Activated naive CD4-positive, alpha-beta T cell treated with anti-CD3 and anti-CD28 coated beads for 36 hours (primary cell): ENCODE measurements at regions of chr1 and their contacts with region 1.

Region 1: GRCh38 chr1:218521375-218522169 is 176.4 kb downstream of the TGFB2 start:
- DNase-seq: peak; percentile 69
- H3K4me3 Mint-ChIP-seq: no peak overlapping the region
- H3K27ac Mint-ChIP-seq: no peak overlapping the region
- H3K4me1 Mint-ChIP-seq: no peaks in the 10 kb centered on the region
- H3K27me3 Mint-ChIP-seq: peaks cover 16% of the 10 kb centered on the region

Region 2: GRCh38 chr1:218259800-218260199 is 261.8 kb before region 1 on chr1:
- CTCF ChIA-PET with region 1: no interaction called
- intact Hi-C with region 1: loop called (anchors 10 kb)
- DNase-seq: peak; percentile 5
- H3K4me3 Mint-ChIP-seq: no peak overlapping the region
- H3K27ac Mint-ChIP-seq: no peak overlapping the region
- H3K4me1 Mint-ChIP-seq: no peaks in the 10 kb centered on the region
- H3K27me3 Mint-ChIP-seq: peaks cover 23% of the 10 kb centered on the region

Region 3: GRCh38 chr1:218299416-218299815 is 222.2 kb before region 1 on chr1:
- CTCF ChIA-PET with region 1: interaction called, 3 read pairs
- intact Hi-C with region 1: loop called (anchors 1 kb)
- DNase-seq: no peak
- H3K4me3 Mint-ChIP-seq: no peak overlapping the region
- H3K27ac Mint-ChIP-seq: no peak overlapping the region
- H3K4me1 Mint-ChIP-seq: peaks cover 27% of the 10 kb centered on the region
- H3K27me3 Mint-ChIP-seq: no peaks in the 10 kb centered on the region

Region 4: DNA sequence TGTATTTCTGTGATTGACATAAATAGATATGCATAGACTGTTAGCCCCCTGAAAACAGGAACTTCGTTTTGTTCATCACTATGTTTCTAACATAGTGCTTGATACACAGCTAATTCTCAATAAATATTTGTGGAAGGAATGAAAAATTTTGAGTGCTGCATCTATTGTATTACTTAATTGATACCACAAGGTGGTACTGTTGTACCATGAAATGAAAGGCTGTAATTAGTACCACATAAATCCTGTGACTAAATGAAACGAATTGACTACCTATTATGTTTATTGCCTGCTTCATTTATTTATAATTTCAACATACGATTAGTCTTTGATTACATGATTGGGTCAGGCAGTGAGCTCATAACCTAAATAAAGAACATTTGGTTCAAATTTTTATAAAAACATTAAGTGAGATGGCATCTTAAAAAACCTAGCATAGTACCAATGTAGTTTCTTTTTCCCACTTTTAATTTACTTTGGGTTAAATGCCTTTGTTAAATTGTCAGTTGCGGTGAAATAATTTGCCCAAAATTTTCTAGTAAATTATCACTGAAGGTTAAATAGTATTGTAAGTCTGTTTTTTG is 191.4 kb before region 1 on chr1:
- CTCF ChIA-PET with region 1: interaction called, 10 read pairs
- intact Hi-C with region 1: loop called (anchors 1 kb)
- DNase-seq: no peak
- H3K4me3 Mint-ChIP-seq: no peak overlapping the region
- H3K27ac Mint-ChIP-seq: no peak overlapping the region
- H3K4me1 Mint-ChIP-seq: no peaks in the 10 kb centered on the region
- H3K27me3 Mint-ChIP-seq: no peaks in the 10 kb centered on the region

Region 5: DNA sequence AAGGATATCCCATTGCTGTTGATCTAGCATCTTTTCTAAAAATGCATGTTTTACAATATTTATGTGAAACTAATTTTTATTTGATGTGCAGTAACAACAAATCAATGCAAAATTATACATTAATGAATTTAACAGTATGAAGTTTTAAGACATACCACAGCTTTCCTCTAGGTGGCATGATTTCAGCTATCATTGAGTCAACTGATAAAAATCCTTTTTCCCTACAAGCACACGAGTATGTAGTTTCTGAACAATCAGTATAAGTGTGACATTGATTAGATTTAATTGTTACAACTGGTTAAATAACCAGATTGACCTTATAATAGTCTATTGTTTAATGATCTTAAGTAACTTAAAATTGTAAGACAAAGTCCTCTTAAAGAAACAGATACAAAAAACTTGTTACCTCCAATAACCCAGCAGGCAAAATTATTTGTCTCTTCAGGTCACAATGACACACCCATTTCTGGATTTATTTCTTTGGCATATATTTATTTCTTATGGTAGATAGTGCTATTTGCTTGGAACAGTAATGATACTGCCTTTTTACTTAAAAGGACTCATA is 182.2 kb before region 1 on chr1:
- CTCF ChIA-PET with region 1: interaction called, 4 read pairs
- intact Hi-C with region 1: loop called (anchors 1 kb)
- DNase-seq: no peak
- H3K4me3 Mint-ChIP-seq: no peak overlapping the region
- H3K27ac Mint-ChIP-seq: no peak overlapping the region
- H3K4me1 Mint-ChIP-seq: no peaks in the 10 kb centered on the region
- H3K27me3 Mint-ChIP-seq: peaks cover 17% of the 10 kb centered on the region

Region 6: DNA sequence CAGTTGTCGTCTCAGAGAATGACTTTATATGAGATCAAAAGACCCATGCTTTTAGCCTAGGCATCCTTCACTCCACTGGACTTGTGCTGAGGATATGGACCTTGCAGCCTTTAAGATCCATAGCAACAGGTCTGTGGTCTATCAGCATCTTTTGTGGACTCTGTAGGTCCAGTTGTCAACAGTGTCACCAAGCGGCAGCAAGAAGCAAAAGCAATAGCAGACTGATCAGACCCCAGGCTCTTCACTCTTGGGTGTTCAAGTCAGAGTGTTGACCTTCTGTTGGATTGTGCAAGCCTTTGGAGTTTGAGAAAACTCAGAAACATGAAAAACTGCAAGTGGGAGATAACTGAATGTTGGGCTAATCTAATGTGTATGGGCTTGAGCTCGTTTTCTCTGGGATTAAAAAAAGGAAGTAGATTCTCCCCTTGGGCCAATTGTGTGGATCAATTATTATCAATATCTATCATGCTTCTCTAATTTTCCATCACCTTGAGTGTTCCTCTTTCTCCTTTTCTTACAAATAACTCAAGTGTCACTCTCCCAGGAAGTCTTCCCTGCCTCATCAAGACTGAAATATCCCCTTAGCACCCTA is 796.3 kb after region 1 on chr1:
- CTCF ChIA-PET with region 1: no interaction called
- intact Hi-C with region 1: loop called (anchors 10 kb)
- DNase-seq: no peak
- H3K4me3 Mint-ChIP-seq: no peak overlapping the region
- H3K27ac Mint-ChIP-seq: no peak overlapping the region
- H3K4me1 Mint-ChIP-seq: no peaks in the 10 kb centered on the region
- H3K27me3 Mint-ChIP-seq: no peaks in the 10 kb centered on the region